Right cardiac atrium (tissue), 5 donors: ENCODE measurements at regions of chr15 and their contacts with region 1.

Region 1: GRCh38 chr15:83364501-83364900 is 80.0 kb upstream of the BNC1 start:
- DNase-seq: no peak
- ATAC-seq: no peak
- H3K4me3 ChIP-seq: no peak overlapping the region
- H3K27ac ChIP-seq: no peak overlapping the region
- H3K4me1 ChIP-seq: no peaks in the 10 kb centered on the region
- H3K27me3 ChIP-seq: peaks cover 2% of the 10 kb centered on the region

Region 2: GRCh38 chr15:83304861-83305703 is 59.4 kb before region 1 on chr15:
- intact Hi-C with region 1: loop called in 1 of 4 experiments (anchors 5 kb)
- DNase-seq: no peak
- ATAC-seq: no peak
- H3K4me3 ChIP-seq: no peak overlapping the region
- H3K27ac ChIP-seq: no peak overlapping the region
- H3K4me1 ChIP-seq: no peaks in the 10 kb centered on the region
- H3K27me3 ChIP-seq: no peaks in the 10 kb centered on the region

Region 3: DNA sequence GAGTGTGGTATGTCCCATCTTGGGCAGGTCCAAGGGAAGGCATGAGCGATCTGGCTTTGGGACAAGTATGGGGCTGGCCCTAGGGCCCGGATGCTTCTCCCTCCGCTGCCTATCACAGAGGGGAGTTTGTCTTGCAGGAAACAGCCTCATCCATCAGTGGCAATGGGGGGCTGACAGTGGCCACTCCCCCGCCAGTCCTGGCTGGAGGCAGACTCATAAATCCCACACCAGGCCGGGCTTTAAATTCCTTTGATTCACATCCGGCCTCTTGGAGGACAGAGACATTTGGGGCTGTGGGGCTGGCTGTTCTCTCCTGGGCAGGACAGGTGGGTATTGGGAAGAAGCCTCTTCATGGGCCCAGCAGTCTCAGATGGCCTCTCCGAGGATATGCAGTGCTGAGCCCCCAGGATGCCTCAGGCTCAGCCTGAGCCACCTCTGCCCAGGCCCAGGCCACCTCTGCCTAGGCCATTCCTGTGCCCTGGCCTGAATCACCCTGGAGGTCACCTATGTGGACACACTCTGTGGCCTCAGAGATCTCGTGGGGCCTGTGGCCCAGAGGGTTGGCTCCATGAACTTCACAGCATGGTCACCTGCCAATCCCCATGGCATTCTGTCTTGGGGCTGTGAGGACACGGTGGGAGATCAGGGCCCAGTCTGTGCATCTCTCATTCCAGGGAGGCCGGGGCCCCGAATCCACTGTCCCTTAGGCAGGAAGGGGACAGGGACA is 786.9 kb after region 1 on chr15:
- intact Hi-C with region 1: no loop called
- DNase-seq: no peak
- ATAC-seq: no peak
- H3K4me3 ChIP-seq: no peak overlapping the region
- H3K27ac ChIP-seq: no peak overlapping the region
- H3K4me1 ChIP-seq: no peaks in the 10 kb centered on the region
- H3K27me3 ChIP-seq: no peaks in the 10 kb centered on the region